Ascending aorta (tissue), 2 donors: ENCODE measurements at regions of chr10 and their contacts with region 1.

Region 1: GRCh38 chr10:43824934-43825333 is 176.3 kb upstream of the ZNF32 start:
- DNase-seq: peak; percentile 42 to 92
- H3K4me3 ChIP-seq: no peak overlapping the region
- H3K27ac ChIP-seq: peak overlapping the region; percentile 88
- H3K4me1 ChIP-seq: peaks cover 6 to 38% of the 10 kb centered on the region in 2 donors
- H3K27me3 ChIP-seq: no peaks in the 10 kb centered on the region
- CTCF ChIP-seq: no peak

Region 2: DNA sequence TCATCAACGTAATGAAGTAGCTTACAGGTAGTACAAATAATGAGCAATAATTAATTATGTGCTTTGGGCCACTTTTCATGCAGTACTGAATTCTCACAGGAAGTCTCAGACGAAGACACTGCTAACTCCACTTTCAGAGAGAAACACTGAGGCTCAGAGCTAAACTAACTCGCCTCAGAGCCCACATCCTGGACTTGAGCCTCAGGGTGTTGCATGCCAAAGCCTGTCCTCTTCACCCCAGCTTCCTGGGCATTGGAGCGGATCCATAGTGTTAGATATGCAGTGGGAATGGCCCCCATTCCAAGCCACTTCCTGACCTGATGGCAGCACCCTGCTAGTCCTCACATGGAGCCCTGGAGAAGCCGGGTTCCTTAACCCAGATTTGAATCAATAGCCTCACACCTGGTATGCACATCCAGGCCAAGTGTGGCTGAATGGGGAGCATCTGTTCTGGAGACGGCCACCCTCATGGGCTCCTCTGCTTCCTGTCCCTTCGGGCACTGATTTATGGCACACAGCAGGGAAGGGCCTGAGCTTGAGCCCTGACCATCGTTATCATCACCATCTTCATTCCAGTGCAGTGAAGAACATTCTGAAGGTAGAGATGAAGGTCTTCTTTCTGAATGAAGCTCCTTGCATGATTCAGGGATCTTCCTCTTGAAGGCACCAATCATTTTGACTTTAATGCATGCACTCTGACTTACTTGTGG is 88.9 kb after region 1 on chr10:
- intact Hi-C with region 1: loop called (anchors 5 kb)
- DNase-seq: no peak
- H3K4me3 ChIP-seq: no peak overlapping the region
- H3K27ac ChIP-seq: no peak overlapping the region
- H3K4me1 ChIP-seq: peaks cover 0 to 24% of the 10 kb centered on the region in 2 donors
- H3K27me3 ChIP-seq: no peaks in the 10 kb centered on the region
- CTCF ChIP-seq: no peak